ENCODE measurements at regions of chr1 and their contacts with region 1.

Region 1: GRCh38 chr1:25232027-25232865 is at the start of gene SYF2:
- H3K4me3 ChIP-seq: peak within 1 kb of the TSS; percentile 94
- H3K27ac ChIP-seq: peak within 1 kb of the TSS; percentile 53
- H3K4me1 ChIP-seq: 0 out of 2 replicates have a peak, but pooled peaks cover 3% of the 10 kb centered on the region
- CTCF ChIP-seq: no peak

Region 2: GRCh38 chr1:24699628-24700027 is 532.6 kb before region 1 on chr1:
- CTCF ChIA-PET with region 1: no interaction called
- POLR2A ChIA-PET with region 1: interaction called, 12 read pairs
- H3K4me3 ChIP-seq: no peak overlapping the region
- H3K27ac ChIP-seq: no peak overlapping the region
- H3K4me1 ChIP-seq: peaks cover 3% of the 10 kb centered on the region; the same call in 1 of the 2 replicates
- CTCF ChIP-seq: no peak

Region 3: DNA sequence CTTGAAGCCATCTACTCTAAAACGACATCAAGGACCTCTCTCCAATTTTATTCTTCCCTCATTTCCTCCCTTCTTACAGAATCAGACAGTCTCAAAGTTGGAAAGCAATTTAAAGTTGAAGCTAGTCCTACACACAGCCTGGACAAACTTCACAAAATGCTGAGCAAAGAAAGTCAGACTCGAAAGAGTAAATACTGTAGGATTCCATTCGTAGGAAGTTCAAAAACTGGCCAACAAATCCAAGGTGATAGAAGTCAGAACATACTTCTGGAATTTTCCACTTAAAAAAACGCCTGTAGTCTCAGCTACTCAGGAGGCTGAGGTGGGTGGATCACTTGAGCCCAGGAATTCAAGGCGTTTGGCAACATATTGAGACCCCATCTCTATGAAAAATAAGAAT is 19.5 kb before region 1 on chr1:
- CTCF ChIA-PET with region 1: no interaction called
- POLR2A ChIA-PET with region 1: no interaction called
- H3K4me3 ChIP-seq: no peak overlapping the region
- H3K27ac ChIP-seq: no peak overlapping the region
- H3K4me1 ChIP-seq: no peaks in the 10 kb centered on the region
- CTCF ChIP-seq: no peak

Region 4: GRCh38 chr1:25247024-25247828 is 15.0 kb after region 1 on chr1 and contains the start of gene RSRP1:
- CTCF ChIA-PET with region 1: interaction called, 4 read pairs
- POLR2A ChIA-PET with region 1: interaction called, 100 read pairs
- H3K4me3 ChIP-seq: peak within 1 kb of the TSS; percentile 99
- H3K27ac ChIP-seq: peak within 1 kb of the TSS; percentile 96
- H3K4me1 ChIP-seq: 0 out of 2 replicates have a peak, but pooled peaks cover 2% of the 10 kb centered on the region
- CTCF ChIP-seq: no peak

Measured in HEK293 (cell line).